ENCODE measurements at regions of chr14 and their contacts with region 1.

Region 1: GRCh38 chr14:93206793-93207467 is at the starts of genes GON7 and UBR7:
- DNase-seq: peak; percentile 86
- ATAC-seq: peak; percentile 89
- H3K4me3 ChIP-seq: peak within 1 kb of the TSS; percentile 76
- H3K27ac ChIP-seq: peak within 1 kb of the TSS; percentile 86
- H3K4me1 ChIP-seq: peaks cover 15% of the 10 kb centered on the region
- H3K27me3 ChIP-seq: no peaks in the 10 kb centered on the region
- CTCF ChIP-seq: peak in 2 of 3 experiments; percentile 16 to 20; a peak in 2 of 6 replicates
- EP300 ChIP-seq: 0 out of 4 replicates have a peak, but pooled peaks of 1 of the 2 experiments have one; percentile 21
- POLR2A ChIP-seq: peak; percentile 92
- RAD21 ChIP-seq: 0 out of 2 replicates have a peak, but pooled peaks have one; percentile 13
- polyA plus RNA-seq, gene GON7: 25.9 to 31.2 TPM
- polyA plus RNA-seq, gene UBR7: 14.3 to 20.8 TPM

Region 2: GRCh38 chr14:92801917-92802316 is 405.0 kb before region 1 on chr14:
- CTCF ChIA-PET with region 1: no interaction called
- POLR2A ChIA-PET with region 1: no interaction called
- RAD21 ChIA-PET with region 1: no interaction called
- SMC1A ChIA-PET with region 1: no interaction called
- in situ Hi-C with region 1: no loop called
- intact Hi-C with region 1: no loop called
- DNase-seq: no peak
- ATAC-seq: no peak
- H3K4me3 ChIP-seq: no peak overlapping the region
- H3K27ac ChIP-seq: no peak overlapping the region
- H3K4me1 ChIP-seq: no peaks in the 10 kb centered on the region; the same call in 1 of the 2 replicates
- H3K27me3 ChIP-seq: no peaks in the 10 kb centered on the region
- CTCF ChIP-seq: no peak
- EP300 ChIP-seq: no peak
- POLR2A ChIP-seq: no peak
- RAD21 ChIP-seq: no peak

Region 3: GRCh38 chr14:93173943-93174395 is 33.0 kb before region 1 on chr14:
- CTCF ChIA-PET with region 1: interaction called, 47 read pairs
- POLR2A ChIA-PET with region 1: interaction called, 6 read pairs
- RAD21 ChIA-PET with region 1: interaction called, 6 read pairs
- SMC1A ChIA-PET with region 1: interaction called, 7 read pairs
- in situ Hi-C with region 1: no loop called
- intact Hi-C with region 1: loop called (anchors 5 kb)
- DNase-seq: no peak
- ATAC-seq: peak; percentile 42
- H3K4me3 ChIP-seq: no peak overlapping the region
- H3K27ac ChIP-seq: no peak overlapping the region
- H3K4me1 ChIP-seq: no peaks in the 10 kb centered on the region
- H3K27me3 ChIP-seq: no peaks in the 10 kb centered on the region
- CTCF ChIP-seq: no peak
- EP300 ChIP-seq: no peak
- POLR2A ChIP-seq: no peak
- RAD21 ChIP-seq: no peak

Region 4: DNA sequence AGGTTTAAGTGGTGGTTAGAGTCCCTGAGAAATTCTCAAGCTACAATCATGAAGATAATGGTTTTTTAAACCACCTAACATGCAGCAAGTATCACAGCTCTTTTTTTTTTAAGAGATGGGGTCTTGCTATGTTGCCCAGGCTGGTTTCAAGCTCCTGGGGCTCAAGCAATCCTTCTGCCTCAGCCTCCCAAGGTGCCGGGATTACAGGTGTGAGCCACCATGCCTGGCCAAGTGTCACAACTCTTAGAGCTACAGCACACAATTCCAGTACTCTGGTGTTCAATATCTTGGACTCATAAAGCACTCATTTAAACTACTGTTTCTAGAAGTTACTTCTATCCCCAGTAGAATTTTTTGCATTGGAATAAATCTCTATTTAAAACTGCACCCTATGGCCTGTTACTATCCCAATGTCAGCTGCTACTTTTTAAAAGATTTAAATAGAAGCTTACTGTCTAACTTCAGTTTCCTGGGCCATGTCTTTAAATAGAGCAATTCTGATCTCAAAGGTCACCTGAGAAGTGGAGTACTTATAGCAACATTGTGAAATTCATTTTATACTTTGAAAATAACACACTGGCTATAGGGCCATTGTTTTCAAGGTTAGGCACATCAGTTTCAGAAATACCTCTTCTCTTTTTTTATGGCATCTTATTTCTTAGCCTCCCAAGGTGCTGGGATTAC is 11.5 kb before region 1 on chr14:
- CTCF ChIA-PET with region 1: interaction called, 9 read pairs
- POLR2A ChIA-PET with region 1: interaction called, 6 read pairs
- RAD21 ChIA-PET with region 1: interaction called, 7 read pairs
- SMC1A ChIA-PET with region 1: interaction called, 27 read pairs
- in situ Hi-C with region 1: no loop called
- intact Hi-C with region 1: no loop called
- DNase-seq: no peak
- ATAC-seq: no peak
- H3K4me3 ChIP-seq: no peak overlapping the region
- H3K27ac ChIP-seq: no peak overlapping the region
- H3K4me1 ChIP-seq: no peaks in the 10 kb centered on the region
- H3K27me3 ChIP-seq: no peaks in the 10 kb centered on the region
- CTCF ChIP-seq: no peak
- EP300 ChIP-seq: no peak
- POLR2A ChIP-seq: no peak
- RAD21 ChIP-seq: no peak

Region 5: GRCh38 chr14:93543766-93544165 is 336.8 kb after region 1 on chr14:
- CTCF ChIA-PET with region 1: interaction called, 26 read pairs
- POLR2A ChIA-PET with region 1: no interaction called
- RAD21 ChIA-PET with region 1: interaction called, 12 read pairs
- SMC1A ChIA-PET with region 1: interaction called, 6 read pairs
- in situ Hi-C with region 1: no loop called
- intact Hi-C with region 1: no loop called
- DNase-seq: no peak
- ATAC-seq: no peak
- H3K4me3 ChIP-seq: no peak overlapping the region
- H3K27ac ChIP-seq: no peak overlapping the region
- H3K4me1 ChIP-seq: no peaks in the 10 kb centered on the region
- H3K27me3 ChIP-seq: no peaks in the 10 kb centered on the region
- CTCF ChIP-seq: peak; percentile 22 to 53 (median 33); a peak in 4 of 6 replicates
- EP300 ChIP-seq: no peak
- POLR2A ChIP-seq: no peak
- RAD21 ChIP-seq: peak; percentile 55